ENCODE measurements at regions of chr15 and their contacts with region 1.

Region 1: GRCh38 chr15:60326824-60327654 is 70.7 kb downstream of the ANXA2 start:
- DNase-seq: peak; percentile 41
- H3K4me3 ChIP-seq: no peak overlapping the region
- H3K27ac ChIP-seq: no peak overlapping the region
- H3K4me1 ChIP-seq: no peaks in the 10 kb centered on the region
- H3K27me3 ChIP-seq: no peaks in the 10 kb centered on the region
- CTCF ChIP-seq: peak; percentile 80 to 84 (median 82)
- POLR2A ChIP-seq: no peak

Region 2: GRCh38 chr15:59725172-59725486 is 601.9 kb before region 1 on chr15:
- intact Hi-C with region 1: loop called (anchors 10 kb)
- DNase-seq: no peak
- H3K4me3 ChIP-seq: no peak overlapping the region
- H3K27ac ChIP-seq: no peak overlapping the region
- H3K4me1 ChIP-seq: no peaks in the 10 kb centered on the region
- H3K27me3 ChIP-seq: no peaks in the 10 kb centered on the region
- CTCF ChIP-seq: no peak
- POLR2A ChIP-seq: no peak

Measured in testis (tissue), 5 donors.